ENCODE measurements at regions of chr3 and their contacts with region 1.

Region 1: DNA sequence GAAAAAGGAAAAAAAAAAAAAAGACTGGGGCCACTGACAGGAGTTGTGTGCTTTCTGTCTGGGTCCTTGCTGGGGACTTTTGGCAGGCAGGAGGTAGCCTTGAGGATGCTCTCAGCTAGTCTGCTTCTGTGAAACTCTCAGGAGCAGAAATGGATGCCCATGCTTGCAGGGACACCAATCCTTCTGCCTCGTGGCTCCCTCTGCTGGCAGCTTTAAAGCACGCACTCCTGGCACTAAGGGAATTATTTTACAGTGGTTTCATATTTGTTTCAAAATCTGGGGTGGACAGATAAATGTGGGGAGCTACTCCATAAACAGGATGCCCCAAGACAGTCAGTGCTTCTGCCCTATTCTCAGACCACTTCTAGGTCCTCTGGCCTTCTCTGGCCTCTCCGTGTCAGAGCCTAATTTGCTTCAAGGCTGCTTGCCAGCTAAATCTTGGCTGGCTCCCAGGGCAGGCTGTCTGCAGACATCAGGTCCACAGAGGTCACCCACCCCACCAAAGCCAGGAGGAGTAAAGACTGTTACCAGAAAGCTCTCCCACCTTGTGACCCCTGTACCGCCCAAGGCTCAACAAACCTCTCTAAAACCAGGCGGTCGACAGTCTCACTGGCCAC is 17.1 kb downstream of the TRAIP start:
- H3K4me3 Mint-ChIP-seq: no peak overlapping the region
- H3K27ac Mint-ChIP-seq: no peak overlapping the region
- H3K4me1 Mint-ChIP-seq: no peaks in the 10 kb centered on the region
- H3K27me3 Mint-ChIP-seq: no peaks in the 10 kb centered on the region

Region 2: GRCh38 chr3:49703443-49703927 is 135.8 kb before region 1 on chr3:
- intact Hi-C with region 1: loop called (anchors 1 kb)
- H3K4me3 Mint-ChIP-seq: no peak overlapping the region
- H3K27ac Mint-ChIP-seq: no peak overlapping the region
- H3K4me1 Mint-ChIP-seq: peaks cover 5% of the 10 kb centered on the region
- H3K27me3 Mint-ChIP-seq: no peaks in the 10 kb centered on the region

Region 3: GRCh38 chr3:49802719-49803464 is 36.4 kb before region 1 on chr3 and contains the start of gene INKA1:
- intact Hi-C with region 1: loop called (anchors 1 kb)
- H3K4me3 Mint-ChIP-seq: peak within 1 kb of the TSS; percentile 84
- H3K27ac Mint-ChIP-seq: peak within 1 kb of the TSS; percentile 80
- H3K4me1 Mint-ChIP-seq: peaks cover 51% of the 10 kb centered on the region
- H3K27me3 Mint-ChIP-seq: peaks cover 27% of the 10 kb centered on the region

Measured in dendritic cell treated with granulocyte-macrophage colony-stimulating factor and Interleukin-4, amounts not matched to agents 40 ng/mL and 50 ng/mL, for 4 days (primary cell).